Aorta (tissue), 5 donors: ENCODE measurements at regions of chr17 and their contacts with region 1.

Region 1: DNA sequence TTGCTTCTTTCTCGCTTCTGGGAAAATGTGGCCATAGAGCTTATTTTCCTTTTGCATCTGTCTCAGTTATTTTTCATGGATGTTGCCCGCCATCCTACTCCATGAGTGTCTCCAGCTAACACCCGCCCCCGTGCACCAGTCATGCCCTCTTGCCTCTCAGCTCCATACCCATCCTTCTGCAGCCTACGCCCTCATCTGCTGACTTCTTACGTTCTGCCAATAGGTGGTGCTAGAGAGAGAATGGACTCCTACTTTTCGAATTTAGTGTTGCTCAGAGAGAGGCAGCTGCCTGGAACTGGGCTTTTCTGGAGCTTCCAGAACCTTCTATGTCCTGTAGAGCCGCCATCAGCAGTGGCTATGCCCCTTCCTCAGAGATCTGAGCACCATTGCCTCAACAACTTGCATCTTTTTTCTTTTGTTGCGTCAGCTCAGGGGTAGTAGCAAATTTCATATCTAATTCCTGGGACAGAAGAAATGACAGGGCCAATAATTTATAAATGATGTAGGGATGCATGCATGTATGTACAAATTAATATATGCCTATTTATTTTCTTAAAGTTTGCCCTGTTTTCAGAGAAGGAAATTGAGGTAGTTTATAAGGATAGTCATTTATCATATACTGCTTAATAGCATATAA is 119.7 kb upstream of the MYOCD start:
- DNase-seq: no peak
- ATAC-seq: peak; percentile 64
- H3K4me3 ChIP-seq: no peak overlapping the region
- H3K27ac ChIP-seq: no peak overlapping the region
- H3K4me1 ChIP-seq: peaks cover 0 to 5% of the 10 kb centered on the region in 2 donors
- H3K27me3 ChIP-seq: no peaks in the 10 kb centered on the region

Region 2: DNA sequence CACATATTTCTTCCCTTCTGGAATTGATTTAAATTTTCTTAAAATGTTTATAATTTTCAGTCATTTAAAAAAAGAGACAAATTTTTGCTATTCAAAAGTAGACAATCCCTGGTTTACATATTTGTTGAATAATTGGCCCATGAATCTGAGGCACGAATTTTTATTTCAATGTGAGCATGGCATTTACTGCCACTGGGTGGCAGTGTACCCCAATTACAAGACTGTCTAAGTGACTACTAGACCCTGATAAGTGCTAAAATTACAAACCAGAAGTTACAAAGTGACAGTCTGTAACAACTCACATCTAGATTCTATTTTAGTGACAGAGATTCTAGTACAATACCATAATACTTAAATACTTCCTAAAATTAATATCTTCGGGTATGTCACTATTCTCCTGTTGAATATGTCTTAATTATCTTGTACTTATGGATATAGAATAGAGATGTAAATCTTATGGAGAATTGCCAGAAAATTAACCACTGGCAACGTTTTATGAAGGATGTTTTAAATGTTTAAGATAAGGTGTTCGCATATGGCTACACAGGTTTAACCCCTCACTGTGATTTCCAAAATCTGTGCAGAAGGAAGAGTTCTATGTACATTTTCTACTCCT is 289.5 kb before region 1 on chr17:
- intact Hi-C with region 1: loop called (anchors 5 to 10 kb)
- DNase-seq: no peak
- ATAC-seq: peak; percentile 77
- H3K4me3 ChIP-seq: peak overlapping the region; percentile 23 to 35
- H3K27ac ChIP-seq: no peak overlapping the region
- H3K4me1 ChIP-seq: no peaks in the 10 kb centered on the region
- H3K27me3 ChIP-seq: no peaks in the 10 kb centered on the region

Region 3: GRCh38 chr17:12627177-12627629 is 81.2 kb after region 1 on chr17:
- intact Hi-C with region 1: loop called (anchors 2 to 5 kb)
- DNase-seq: peak; percentile 84 to 87
- ATAC-seq: peak; percentile 90
- H3K4me3 ChIP-seq: peak overlapping the region in 1 of 2 donors; percentile 13
- H3K27ac ChIP-seq: peak overlapping the region; percentile 85 to 93
- H3K4me1 ChIP-seq: peaks cover 3 to 6% of the 10 kb centered on the region in 2 donors
- H3K27me3 ChIP-seq: no peaks in the 10 kb centered on the region

Region 4: DNA sequence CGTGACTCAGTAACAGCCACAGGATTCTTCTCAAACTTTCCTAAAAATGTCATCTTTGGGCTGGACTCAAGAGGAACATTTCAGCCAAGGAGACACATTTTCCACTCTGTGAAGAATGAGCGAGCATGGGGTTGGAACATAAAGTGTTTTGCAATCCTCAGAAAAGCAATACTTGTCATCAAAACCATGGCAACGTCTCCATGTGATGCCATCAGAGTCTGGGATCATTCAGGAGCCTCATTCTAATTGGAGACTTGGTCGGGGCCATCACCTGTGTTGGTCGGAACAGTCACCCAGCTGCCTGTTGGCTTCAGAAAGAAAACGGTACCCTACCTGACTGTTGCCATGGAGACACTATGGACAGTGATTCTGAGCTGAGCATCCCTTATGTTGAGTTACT is 145.2 kb after region 1 on chr17:
- intact Hi-C with region 1: loop called in 1 of 2 experiments (anchors 5 kb)
- DNase-seq: peak; percentile 63 to 77
- ATAC-seq: peak; percentile 86
- H3K4me3 ChIP-seq: no peak overlapping the region
- H3K27ac ChIP-seq: peak overlapping the region; percentile 57 to 89
- H3K4me1 ChIP-seq: peaks cover 0 to 4% of the 10 kb centered on the region in 2 donors
- H3K27me3 ChIP-seq: no peaks in the 10 kb centered on the region

Region 5: GRCh38 chr17:12744298-12744697 is 198.3 kb after region 1 on chr17:
- intact Hi-C with region 1: loop called in 1 of 2 experiments (anchors 10 kb)
- DNase-seq: no peak
- ATAC-seq: peak; percentile 53
- H3K4me3 ChIP-seq: no peak overlapping the region
- H3K27ac ChIP-seq: peak overlapping the region in 1 of 2 donors; percentile 42
- H3K4me1 ChIP-seq: peaks cover 4 to 5% of the 10 kb centered on the region in 2 donors
- H3K27me3 ChIP-seq: no peaks in the 10 kb centered on the region